ENCODE measurements at regions of chr3 and their contacts with region 1.

Region 1: DNA sequence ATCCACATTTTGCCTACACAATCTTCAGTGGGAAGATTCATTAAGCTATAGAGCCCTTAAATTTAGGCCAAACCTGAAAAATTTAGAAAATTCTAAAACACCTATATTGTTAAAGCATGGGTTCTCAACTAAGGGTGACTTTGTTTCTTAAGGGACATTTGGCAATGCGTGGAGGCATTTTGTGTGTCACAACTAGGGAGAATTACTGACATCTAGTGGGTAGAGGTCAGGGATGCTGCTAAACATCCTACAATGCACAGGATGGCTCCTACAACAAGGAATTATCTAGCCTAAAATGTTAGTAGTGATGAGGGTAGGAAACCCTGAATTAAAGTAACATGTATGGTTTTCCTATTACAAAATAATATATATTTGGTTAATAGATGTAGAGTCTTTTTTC is 55.8 kb downstream of the TBC1D5 start:
- DNase-seq: no peak

Region 2: GRCh38 chr3:17431004-17431403 is 255.6 kb before region 1 on chr3:
- intact Hi-C with region 1: loop called (anchors 5 kb)
- DNase-seq: no peak